IMR-90 (cell line): ENCODE measurements at regions of chr19 and their contacts with region 1.

Region 1: GRCh38 chr19:14023404-14024235 is 4.3 kb upstream of the RLN3 start:
- DNase-seq: peak; percentile 44
- ATAC-seq: peak; percentile 89
- H3K4me3 ChIP-seq: no peak overlapping the region
- H3K27ac ChIP-seq: no peak overlapping the region
- H3K4me1 ChIP-seq: no peaks in the 10 kb centered on the region
- H3K27me3 ChIP-seq: peaks cover 11% of the 10 kb centered on the region
- CTCF ChIP-seq: peak; percentile 46
- POLR2A ChIP-seq: no peak
- RAD21 ChIP-seq: no peak

Region 2: GRCh38 chr19:14035709-14036108 is 12.1 kb after region 1 on chr19:
- CTCF ChIA-PET with region 1: interaction called, 3 read pairs
- POLR2A ChIA-PET with region 1: interaction called, 17 read pairs
- dilution Hi-C with region 1: no loop called
- in situ Hi-C with region 1: no loop called
- intact Hi-C with region 1: no loop called
- DNase-seq: no peak
- ATAC-seq: no peak
- H3K4me3 ChIP-seq: no peak overlapping the region
- H3K27ac ChIP-seq: no peak overlapping the region
- H3K4me1 ChIP-seq: no peaks in the 10 kb centered on the region
- H3K27me3 ChIP-seq: peaks cover 5% of the 10 kb centered on the region; the same call in 1 of the 2 replicates
- CTCF ChIP-seq: no peak
- POLR2A ChIP-seq: no peak
- RAD21 ChIP-seq: no peak